GM10248 (cell line): ENCODE measurements at regions of chr22 and their contacts with region 1.

Region 1: GRCh38 chr22:37538590-37539357 is 19.6 kb upstream of the CARD10 start:
- DNase-seq: peak; percentile 94
- CTCF ChIP-seq: peak; percentile 98

Region 2: DNA sequence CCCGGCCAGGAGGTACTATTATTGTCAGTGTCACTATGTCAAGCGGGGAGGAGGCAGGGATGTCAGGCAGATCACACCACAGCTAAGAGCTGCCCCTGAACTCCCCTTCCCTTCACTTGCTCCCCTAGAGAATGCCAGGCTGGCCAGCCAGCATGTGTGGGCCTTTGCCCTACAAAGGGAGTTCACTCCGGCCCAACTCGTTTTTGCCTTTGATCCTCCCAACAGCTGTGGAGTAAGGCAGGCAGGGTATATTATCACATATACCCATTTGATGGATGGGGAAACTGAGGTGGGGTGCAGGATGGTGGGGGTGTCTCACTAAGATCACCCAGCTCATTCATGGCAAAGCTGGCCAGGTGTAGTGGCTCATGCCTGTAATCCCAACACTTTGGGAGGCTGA is 10.1 kb after region 1 on chr22:
- CTCF ChIA-PET with region 1: interaction called, 19 read pairs
- POLR2A ChIA-PET with region 1: no interaction called
- DNase-seq: no peak
- CTCF ChIP-seq: no peak

Region 3: GRCh38 chr22:37588546-37589215 is 49.9 kb after region 1 on chr22:
- CTCF ChIA-PET with region 1: interaction called, 209 read pairs
- POLR2A ChIA-PET with region 1: no interaction called
- DNase-seq: no peak
- CTCF ChIP-seq: no peak

Region 4: DNA sequence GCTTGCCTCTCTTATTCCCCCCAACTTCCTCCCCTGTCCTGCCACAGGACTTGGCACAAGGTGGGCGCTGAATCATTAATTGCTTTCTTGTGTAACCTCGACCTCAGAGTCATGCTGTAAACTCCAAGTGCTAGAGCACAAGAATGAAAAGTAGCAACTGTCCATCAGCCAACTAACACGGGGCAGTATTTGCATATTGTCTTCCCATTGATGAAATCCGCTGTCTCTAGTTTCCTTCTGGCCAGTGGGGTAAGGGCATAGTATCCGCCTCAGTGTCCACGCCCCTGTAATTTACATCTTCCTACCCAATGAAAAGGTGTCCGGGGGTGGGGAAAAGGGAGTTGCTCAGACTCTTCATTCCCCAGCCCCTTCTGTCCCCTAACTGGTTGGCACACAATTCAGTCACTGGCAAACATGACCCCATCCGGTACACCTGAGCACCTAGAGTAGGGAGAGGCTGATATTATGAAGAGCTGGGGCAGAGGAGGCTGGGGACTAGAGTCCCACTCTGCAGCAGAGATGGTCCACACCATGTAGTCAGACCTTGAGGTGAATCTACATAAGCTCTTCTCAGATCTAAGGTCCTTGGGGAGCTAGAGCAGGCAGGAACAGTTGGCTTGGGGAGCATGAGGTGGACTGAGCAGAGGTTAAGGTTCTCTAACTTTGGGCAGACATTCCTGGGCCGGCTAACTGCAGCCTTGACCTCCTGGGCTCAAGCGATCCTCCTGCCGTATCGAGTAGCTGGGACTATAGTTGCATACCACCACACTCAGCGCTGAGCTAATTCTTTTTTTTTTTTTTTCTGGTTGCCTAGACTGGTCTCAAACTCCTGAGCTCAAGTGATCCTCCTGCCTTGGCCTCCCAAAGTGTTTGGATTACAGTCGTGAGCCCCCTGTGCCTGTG is 63.0 kb after region 1 on chr22:
- CTCF ChIA-PET with region 1: interaction called, 29 read pairs
- POLR2A ChIA-PET with region 1: no interaction called
- DNase-seq: no peak
- CTCF ChIP-seq: no peak

Region 5: GRCh38 chr22:37982938-37983859 is 444.4 kb after region 1 on chr22:
- CTCF ChIA-PET with region 1: no interaction called
- POLR2A ChIA-PET with region 1: no interaction called
- DNase-seq: no peak
- CTCF ChIP-seq: no peak